ENCODE measurements at regions of chr10 and their contacts with region 1.

Region 1: GRCh38 chr10:84537447-84537931 is 209.1 kb downstream of the CCSER2 start:
- DNase-seq: peak; percentile 44 to 60 (median 57)
- H3K4me3 ChIP-seq: no peak overlapping the region
- H3K4me3 Mint-ChIP-seq: peak overlapping the region in 1 of 8 donors; percentile 54
- H3K27ac ChIP-seq: no peak overlapping the region
- H3K27ac Mint-ChIP-seq: no peak overlapping the region
- H3K4me1 ChIP-seq: peaks cover 7% of the 10 kb centered on the region
- H3K4me1 Mint-ChIP-seq: peaks cover 7 to 14% (median 9%) of the 10 kb centered on the region in 4 donors
- H3K27me3 ChIP-seq: no peaks in the 10 kb centered on the region
- H3K27me3 Mint-ChIP-seq: peaks cover 8 to 23% of the 10 kb centered on the region in 2 donors

Region 2: GRCh38 chr10:84139126-84140035 is 398.1 kb before region 1 on chr10 and contains the start of gene GHITM:
- CTCF ChIA-PET with region 1: interaction called, 3 read pairs
- POLR2A ChIA-PET with region 1: no interaction called
- intact Hi-C with region 1: loop called (anchors 10 kb)
- DNase-seq: peak; percentile 99 to 100 (median 100)
- H3K4me3 ChIP-seq: peak within 1 kb of the TSS; percentile 43 to 95
- H3K4me3 Mint-ChIP-seq: peak within 1 kb of the TSS; percentile 89 to 99 (median 96)
- H3K27ac ChIP-seq: peak within 1 kb of the TSS; percentile 97
- H3K27ac Mint-ChIP-seq: peak within 1 kb of the TSS; percentile 96 to 99 (median 98)
- H3K4me1 ChIP-seq: peaks cover 25% of the 10 kb centered on the region
- H3K4me1 Mint-ChIP-seq: peaks cover 20 to 34% (median 24%) of the 10 kb centered on the region in 4 donors
- H3K27me3 ChIP-seq: no peaks in the 10 kb centered on the region
- H3K27me3 Mint-ChIP-seq: no peaks in the 10 kb centered on the region
- total RNA-seq, gene GHITM: 83.4 to 88.6 TPM

Region 3: DNA sequence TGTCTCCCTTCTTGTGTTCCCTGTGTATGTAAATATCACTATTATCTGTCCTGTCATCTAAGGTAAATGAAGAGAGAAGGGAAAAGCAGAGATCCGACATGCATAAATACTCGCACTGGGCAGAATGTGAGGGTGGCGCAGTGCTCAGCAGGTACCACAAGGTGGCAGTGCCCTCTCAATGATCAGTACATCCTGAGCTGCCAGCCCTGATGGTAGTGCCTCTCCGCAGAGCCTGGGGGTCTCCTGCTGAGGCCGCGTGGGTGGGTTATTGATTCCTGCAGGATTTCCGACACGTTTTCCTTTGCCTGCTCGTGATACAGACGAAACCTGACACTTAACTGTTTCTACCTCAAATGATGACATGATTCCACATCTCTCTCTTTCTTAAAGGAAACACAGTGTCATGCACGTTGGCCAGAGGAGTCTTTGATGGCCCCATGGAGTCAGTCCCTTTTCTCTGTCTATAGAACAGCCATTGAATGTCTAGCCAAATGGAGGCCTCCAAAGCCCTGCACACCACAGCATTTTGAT is 272.8 kb before region 1 on chr10:
- CTCF ChIA-PET with region 1: interaction called, 326 read pairs
- POLR2A ChIA-PET with region 1: interaction called, 4 read pairs
- intact Hi-C with region 1: loop called (anchors 1 kb)
- DNase-seq: peak; percentile 57 to 68 (median 58)
- H3K4me3 ChIP-seq: no peak overlapping the region
- H3K4me3 Mint-ChIP-seq: no peak overlapping the region
- H3K27ac ChIP-seq: no peak overlapping the region
- H3K27ac Mint-ChIP-seq: no peak overlapping the region
- H3K4me1 ChIP-seq: no peaks in the 10 kb centered on the region
- H3K4me1 Mint-ChIP-seq: peaks cover 8 to 15% (median 10%) of the 10 kb centered on the region in 4 donors
- H3K27me3 ChIP-seq: no peaks in the 10 kb centered on the region
- H3K27me3 Mint-ChIP-seq: peaks cover 10 to 27% of the 10 kb centered on the region in 2 donors

Region 4: DNA sequence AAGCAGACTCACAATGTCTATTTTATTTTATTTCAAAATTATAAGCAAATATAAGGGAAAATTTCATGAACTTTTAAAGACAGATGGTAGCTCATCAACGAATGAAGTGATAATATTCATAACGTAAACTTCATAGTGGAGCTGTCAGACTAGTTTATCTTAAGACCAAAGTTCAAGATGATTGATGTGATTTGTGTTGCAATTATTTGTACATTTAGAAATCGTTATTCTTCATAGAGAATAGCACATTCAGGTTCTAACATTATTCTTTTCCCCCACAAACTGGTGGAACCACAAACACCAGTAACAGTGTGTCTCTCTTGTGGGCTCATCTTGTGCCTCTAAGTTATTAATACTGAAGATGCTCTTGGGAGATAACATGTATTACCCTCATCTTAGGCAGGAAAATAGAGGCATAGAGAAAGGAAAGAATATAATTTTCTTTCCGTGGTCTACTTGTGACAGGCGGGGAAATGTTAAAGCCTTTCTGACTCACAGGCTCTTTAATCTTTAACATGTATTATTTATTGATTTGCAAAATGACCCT is 172.1 kb before region 1 on chr10:
- CTCF ChIA-PET with region 1: interaction called, 17 read pairs
- POLR2A ChIA-PET with region 1: no interaction called
- intact Hi-C with region 1: no loop called
- DNase-seq: no peak
- H3K4me3 ChIP-seq: no peak overlapping the region
- H3K4me3 Mint-ChIP-seq: no peak overlapping the region
- H3K27ac ChIP-seq: no peak overlapping the region
- H3K27ac Mint-ChIP-seq: peak overlapping the region in 3 of 7 donors; percentile 1 to 39 (median 20)
- H3K4me1 ChIP-seq: peaks cover 41% of the 10 kb centered on the region
- H3K4me1 Mint-ChIP-seq: peaks cover 57 to 83% (median 62%) of the 10 kb centered on the region in 4 donors
- H3K27me3 ChIP-seq: no peaks in the 10 kb centered on the region
- H3K27me3 Mint-ChIP-seq: no peaks in the 10 kb centered on the region

Region 5: DNA sequence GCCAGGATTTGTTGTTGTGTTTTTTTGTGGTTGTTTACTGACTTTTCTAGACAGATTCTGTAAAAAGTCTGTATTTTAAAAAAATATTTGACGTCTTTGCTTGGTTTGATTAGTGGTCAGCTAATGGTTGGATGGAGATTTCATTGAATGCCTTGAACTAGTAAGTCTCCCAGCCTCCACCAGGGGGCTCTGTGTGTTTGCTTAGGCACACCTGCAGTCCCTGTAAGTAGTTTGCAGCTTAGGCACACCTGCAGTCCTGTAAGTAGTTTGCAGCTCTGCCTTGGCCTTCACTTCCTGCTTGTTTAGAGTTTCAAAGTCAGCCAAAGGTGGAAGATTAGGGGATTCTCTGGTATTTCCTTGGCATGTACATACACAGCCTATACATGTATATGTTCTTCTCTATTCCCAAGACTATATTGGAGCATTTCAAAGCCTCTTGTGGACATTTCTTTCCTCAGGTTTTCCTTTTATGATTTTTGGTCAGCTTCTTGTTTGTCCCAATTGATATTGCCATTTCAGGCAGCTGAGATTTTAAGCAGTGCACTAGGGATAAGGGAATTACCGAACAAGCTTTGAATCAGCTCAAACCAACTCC is 107.5 kb before region 1 on chr10:
- CTCF ChIA-PET with region 1: interaction called, 51 read pairs
- POLR2A ChIA-PET with region 1: no interaction called
- intact Hi-C with region 1: loop called (anchors 1 kb)
- DNase-seq: peak; percentile 50 to 71 (median 54)
- H3K4me3 ChIP-seq: no peak overlapping the region
- H3K4me3 Mint-ChIP-seq: peak overlapping the region in 1 of 8 donors; percentile 4
- H3K27ac ChIP-seq: no peak overlapping the region
- H3K27ac Mint-ChIP-seq: peak overlapping the region in 2 of 7 donors; percentile 8 to 65
- H3K4me1 ChIP-seq: peaks cover 19% of the 10 kb centered on the region
- H3K4me1 Mint-ChIP-seq: peaks cover 45 to 57% (median 48%) of the 10 kb centered on the region in 4 donors
- H3K27me3 ChIP-seq: no peaks in the 10 kb centered on the region
- H3K27me3 Mint-ChIP-seq: no peaks in the 10 kb centered on the region

Region 6: GRCh38 chr10:86376852-86377796 is 1839.6 kb after region 1 on chr10:
- CTCF ChIA-PET with region 1: interaction called, 74 read pairs
- POLR2A ChIA-PET with region 1: no interaction called
- intact Hi-C with region 1: no loop called
- DNase-seq: peak; percentile 62 to 82 (median 73)
- H3K4me3 ChIP-seq: no peak overlapping the region
- H3K4me3 Mint-ChIP-seq: peak overlapping the region in 2 of 8 donors; percentile 31 to 43
- H3K27ac ChIP-seq: no peak overlapping the region
- H3K27ac Mint-ChIP-seq: no peak overlapping the region
- H3K4me1 ChIP-seq: peaks cover 4% of the 10 kb centered on the region
- H3K4me1 Mint-ChIP-seq: peaks cover 0 to 1% (median 0%) of the 10 kb centered on the region in 4 donors
- H3K27me3 ChIP-seq: peaks cover 12% of the 10 kb centered on the region
- H3K27me3 Mint-ChIP-seq: peaks cover 15 to 22% of the 10 kb centered on the region in 2 donors